ENCODE measurements at regions of chr20 and their contacts with region 1.

Region 1: GRCh38 chr20:13119583-13119982 is 101.5 kb upstream of the ISM1 start:
- DNase-seq: no peak
- H3K4me3 ChIP-seq: no peak overlapping the region
- H3K27ac ChIP-seq: no peak overlapping the region
- H3K4me1 ChIP-seq: no peaks in the 10 kb centered on the region
- H3K27me3 ChIP-seq: no peaks in the 10 kb centered on the region
- CTCF ChIP-seq: peak; percentile 77 to 93 (median 82)

Region 2: GRCh38 chr20:12699374-12700228 is 420.0 kb before region 1 on chr20:
- dilution Hi-C with region 1: loop called (anchors 25 kb)
- DNase-seq: no peak
- H3K4me3 ChIP-seq: no peak overlapping the region
- H3K27ac ChIP-seq: no peak overlapping the region
- H3K4me1 ChIP-seq: no peaks in the 10 kb centered on the region
- H3K27me3 ChIP-seq: no peaks in the 10 kb centered on the region
- CTCF ChIP-seq: no peak

Region 3: DNA sequence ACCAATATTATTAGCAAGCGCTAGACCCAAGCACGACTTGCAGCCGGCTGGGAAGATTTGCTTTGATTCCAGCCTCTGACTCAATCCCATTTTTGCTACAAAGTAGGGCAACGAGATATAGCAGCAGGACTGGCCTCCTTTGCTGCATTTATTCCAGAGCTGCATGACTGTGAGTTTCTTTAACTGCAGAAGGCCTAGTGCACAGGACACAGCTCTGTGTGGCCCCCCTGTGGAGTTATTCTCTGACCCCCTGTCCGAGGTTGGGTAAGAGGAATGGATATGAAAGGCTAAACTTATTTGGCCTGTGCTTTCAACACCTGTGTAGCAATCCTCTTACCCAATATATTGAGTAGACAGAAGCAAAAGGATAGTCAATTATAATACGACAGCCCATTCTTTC is 244.1 kb before region 1 on chr20:
- dilution Hi-C with region 1: no loop called
- DNase-seq: no peak
- H3K4me3 ChIP-seq: no peak overlapping the region
- H3K27ac ChIP-seq: no peak overlapping the region
- H3K4me1 ChIP-seq: no peaks in the 10 kb centered on the region
- H3K27me3 ChIP-seq: peaks cover 1% of the 10 kb centered on the region
- CTCF ChIP-seq: no peak

Measured in keratinocyte (primary cell).